Caco-2 (cell line): ENCODE measurements at regions of chr3 and their contacts with region 1.

Region 1: DNA sequence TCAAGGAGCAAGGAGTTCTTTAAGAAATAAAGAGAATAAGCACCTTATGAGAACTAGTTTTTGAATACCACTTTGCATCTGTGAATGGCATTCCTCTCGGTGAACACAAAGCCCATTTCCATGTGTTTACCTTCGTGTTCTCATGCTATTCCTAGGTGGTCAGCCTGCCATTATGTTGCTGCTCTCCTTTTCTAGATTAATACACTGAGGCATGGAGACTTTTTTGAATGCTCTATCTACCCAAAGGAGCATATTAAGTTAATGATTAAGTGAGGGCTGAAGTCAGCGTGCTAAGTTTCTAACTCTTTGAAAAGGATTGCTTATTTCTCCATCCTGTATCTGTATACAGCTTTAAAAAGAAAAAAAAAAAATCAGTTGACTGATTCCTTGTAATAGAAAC is 394.5 kb downstream of the MECOM start:
- DNase-seq: peak in 1 of 2 experiments; percentile 4
- H3K4me3 ChIP-seq: peak overlapping the region; percentile 17; the same call in 1 of the 2 replicates
- H3K4me3 Mint-ChIP-seq: peak overlapping the region; percentile 66
- H3K27ac Mint-ChIP-seq: peak overlapping the region; percentile 77
- H3K4me1 ChIP-seq: peaks cover 31% of the 10 kb centered on the region
- H3K4me1 Mint-ChIP-seq: peaks cover 22% of the 10 kb centered on the region
- H3K27me3 ChIP-seq: no peaks in the 10 kb centered on the region
- H3K27me3 Mint-ChIP-seq: no peaks in the 10 kb centered on the region
- CTCF ChIP-seq: no peak

Region 2: DNA sequence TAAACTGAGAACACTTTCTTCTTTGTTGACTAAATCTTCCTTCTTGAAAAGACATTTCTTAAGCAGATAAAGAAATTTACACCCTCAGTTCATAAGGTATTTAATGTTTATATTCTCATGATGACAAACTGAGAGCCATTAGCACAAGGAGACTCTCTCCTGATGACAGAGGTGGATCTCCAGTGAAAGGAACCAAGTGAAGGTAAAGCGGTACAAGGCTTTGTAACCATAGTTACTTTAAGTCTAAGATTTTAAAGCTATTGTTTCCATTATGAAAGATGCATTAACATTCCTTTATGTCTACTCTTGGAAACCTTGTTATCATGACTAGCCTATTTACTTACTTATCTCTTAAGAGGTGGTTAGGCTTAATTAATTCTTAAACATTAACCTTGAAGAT is 342.6 kb before region 1 on chr3:
- CTCF ChIA-PET with region 1: no interaction called
- POLR2A ChIA-PET with region 1: no interaction called
- intact Hi-C with region 1: loop called (anchors 1 kb)
- DNase-seq: peak in 1 of 2 experiments; percentile 58
- H3K4me3 ChIP-seq: no peak overlapping the region
- H3K4me3 Mint-ChIP-seq: no peak overlapping the region
- H3K27ac Mint-ChIP-seq: peak overlapping the region; percentile 59
- H3K4me1 ChIP-seq: peaks cover 27% of the 10 kb centered on the region
- H3K4me1 Mint-ChIP-seq: peaks cover 19% of the 10 kb centered on the region
- H3K27me3 ChIP-seq: no peaks in the 10 kb centered on the region
- H3K27me3 Mint-ChIP-seq: no peaks in the 10 kb centered on the region
- CTCF ChIP-seq: no peak

Region 3: GRCh38 chr3:169218314-169218983 is 50.6 kb before region 1 on chr3:
- CTCF ChIA-PET with region 1: no interaction called
- POLR2A ChIA-PET with region 1: no interaction called
- intact Hi-C with region 1: loop called (anchors 2 kb)
- DNase-seq: peak; percentile 67
- H3K4me3 ChIP-seq: no peak overlapping the region
- H3K4me3 Mint-ChIP-seq: no peak overlapping the region
- H3K27ac Mint-ChIP-seq: no peak overlapping the region
- H3K4me1 ChIP-seq: no peaks in the 10 kb centered on the region
- H3K4me1 Mint-ChIP-seq: no peaks in the 10 kb centered on the region
- H3K27me3 ChIP-seq: no peaks in the 10 kb centered on the region
- H3K27me3 Mint-ChIP-seq: no peaks in the 10 kb centered on the region
- CTCF ChIP-seq: peak; percentile 51 to 79

Region 4: DNA sequence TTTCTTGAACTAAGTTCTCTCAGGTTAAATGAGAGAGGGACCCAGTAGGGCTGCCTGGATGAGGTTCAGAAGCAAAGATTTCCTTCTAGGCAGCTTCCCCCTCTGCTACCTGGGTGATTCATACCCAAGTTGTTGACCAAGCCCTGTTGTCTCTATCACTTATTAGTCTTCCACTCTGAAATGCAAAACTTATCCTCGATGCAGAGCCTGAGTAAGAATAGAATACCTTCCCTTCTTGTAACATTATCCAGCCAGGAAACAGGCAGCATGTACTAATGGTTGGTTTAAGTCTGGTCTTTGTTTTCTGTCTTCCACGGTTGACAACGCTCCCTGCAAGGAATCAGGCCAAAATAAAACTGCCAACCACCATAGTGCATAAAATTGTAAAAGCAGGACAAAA is 17.2 kb after region 1 on chr3:
- CTCF ChIA-PET with region 1: no interaction called
- POLR2A ChIA-PET with region 1: no interaction called
- intact Hi-C with region 1: loop called (anchors 2 kb)
- DNase-seq: no peak
- H3K4me3 ChIP-seq: no peak overlapping the region
- H3K4me3 Mint-ChIP-seq: no peak overlapping the region
- H3K27ac Mint-ChIP-seq: no peak overlapping the region
- H3K4me1 ChIP-seq: peaks cover 24% of the 10 kb centered on the region
- H3K4me1 Mint-ChIP-seq: peaks cover 26% of the 10 kb centered on the region
- H3K27me3 ChIP-seq: no peaks in the 10 kb centered on the region
- H3K27me3 Mint-ChIP-seq: no peaks in the 10 kb centered on the region
- CTCF ChIP-seq: no peak

Region 5: DNA sequence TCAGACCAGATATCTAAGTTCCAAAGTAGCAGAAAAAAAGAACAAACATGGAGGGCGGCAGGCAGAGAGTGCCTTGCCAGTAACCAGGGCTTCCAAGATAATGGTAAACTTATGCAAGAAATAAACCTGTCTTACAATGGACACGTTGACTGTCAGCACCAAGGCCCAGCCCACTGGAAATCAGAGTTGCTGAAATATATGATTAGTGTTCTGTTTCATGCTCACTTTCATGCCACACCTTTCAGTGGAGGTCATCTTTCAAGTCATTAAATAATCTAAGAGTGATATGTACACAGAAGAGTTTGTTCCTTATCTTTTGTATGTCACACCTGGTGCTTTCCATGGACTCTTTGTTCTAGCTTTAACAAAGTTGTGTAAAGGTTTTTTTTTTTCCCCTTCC is 36.5 kb after region 1 on chr3:
- CTCF ChIA-PET with region 1: no interaction called
- POLR2A ChIA-PET with region 1: no interaction called
- intact Hi-C with region 1: loop called (anchors 1 kb)
- DNase-seq: peak; percentile 76 to 85
- H3K4me3 ChIP-seq: no peak overlapping the region
- H3K4me3 Mint-ChIP-seq: peak overlapping the region; percentile 20
- H3K27ac Mint-ChIP-seq: peak overlapping the region; percentile 44
- H3K4me1 ChIP-seq: peaks cover 27% of the 10 kb centered on the region
- H3K4me1 Mint-ChIP-seq: peaks cover 13% of the 10 kb centered on the region
- H3K27me3 ChIP-seq: no peaks in the 10 kb centered on the region
- H3K27me3 Mint-ChIP-seq: no peaks in the 10 kb centered on the region
- CTCF ChIP-seq: no peak